ENCODE measurements at regions of chr10 and their contacts with region 1.

Region 1: GRCh38 chr10:32445740-32446535 is at the start of gene CCDC7:
- DNase-seq: peak; percentile 83
- H3K4me3 Mint-ChIP-seq: peak within 1 kb of the TSS; percentile 98
- H3K27ac Mint-ChIP-seq: peak within 1 kb of the TSS; percentile 96
- H3K4me1 Mint-ChIP-seq: peaks cover 9% of the 10 kb centered on the region
- H3K27me3 Mint-ChIP-seq: peaks cover 3% of the 10 kb centered on the region
- total RNA-seq, gene CCDC7: 9.0 and 10.2 TPM in 2 replicates

Region 2: GRCh38 chr10:31928549-31929260 is 517.2 kb before region 1 on chr10 and contains the start of gene ARHGAP12:
- intact Hi-C with region 1: loop called (anchors 5 kb)
- DNase-seq: peak; percentile 68
- H3K4me3 Mint-ChIP-seq: peak within 1 kb of the TSS; percentile 88
- H3K27ac Mint-ChIP-seq: peak within 1 kb of the TSS; percentile 73
- H3K4me1 Mint-ChIP-seq: peaks cover 56% of the 10 kb centered on the region
- H3K27me3 Mint-ChIP-seq: peaks cover 13% of the 10 kb centered on the region
- total RNA-seq, gene ARHGAP12: 2.4 and 3.5 TPM in 2 replicates

Region 3: GRCh38 chr10:32149252-32149955 is 296.5 kb before region 1 on chr10:
- intact Hi-C with region 1: loop called (anchors 1 kb)
- DNase-seq: peak; percentile 36
- H3K4me3 Mint-ChIP-seq: peak overlapping the region; percentile 45
- H3K27ac Mint-ChIP-seq: peak overlapping the region; percentile 94
- H3K4me1 Mint-ChIP-seq: peaks cover 41% of the 10 kb centered on the region
- H3K27me3 Mint-ChIP-seq: no peaks in the 10 kb centered on the region

Region 4: GRCh38 chr10:32459051-32459698 is 13.2 kb after region 1 on chr10:
- intact Hi-C with region 1: loop called (anchors 1 kb)
- DNase-seq: peak; percentile 50
- H3K4me3 Mint-ChIP-seq: no peak overlapping the region
- H3K27ac Mint-ChIP-seq: no peak overlapping the region
- H3K4me1 Mint-ChIP-seq: peaks cover 33% of the 10 kb centered on the region
- H3K27me3 Mint-ChIP-seq: no peaks in the 10 kb centered on the region

Region 5: DNA sequence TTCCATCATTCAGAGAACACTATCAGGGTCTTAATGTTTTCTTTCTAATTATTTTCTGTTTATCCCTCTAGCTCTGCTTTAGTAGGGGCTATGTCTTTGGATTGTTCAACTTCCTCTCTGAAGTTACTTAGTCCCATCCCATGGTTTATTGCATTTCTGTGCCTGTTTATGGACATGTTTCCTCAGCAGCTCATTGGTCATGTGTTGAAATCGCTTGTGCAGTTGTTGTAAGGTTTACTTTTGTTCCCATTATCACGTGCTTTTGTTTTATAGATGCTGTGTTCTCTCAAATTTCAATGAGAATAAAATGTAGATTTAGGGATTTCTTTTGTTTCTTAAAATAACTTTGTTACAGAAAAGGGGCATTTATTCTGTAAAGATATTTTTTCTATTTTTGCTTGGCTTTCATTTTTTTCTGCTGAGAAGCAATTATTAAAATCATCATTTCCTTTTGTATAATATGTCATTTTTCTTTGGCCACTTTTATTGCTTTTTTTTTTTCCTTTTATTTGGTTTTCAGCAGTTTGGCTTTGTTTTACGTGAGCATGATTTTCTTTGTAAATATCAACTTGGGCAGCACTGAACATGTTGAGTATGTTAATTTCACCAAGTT is 111.0 kb after region 1 on chr10:
- intact Hi-C with region 1: no loop called
- DNase-seq: no peak
- H3K4me3 Mint-ChIP-seq: no peak overlapping the region
- H3K27ac Mint-ChIP-seq: no peak overlapping the region
- H3K4me1 Mint-ChIP-seq: no peaks in the 10 kb centered on the region
- H3K27me3 Mint-ChIP-seq: no peaks in the 10 kb centered on the region

Region 6: GRCh38 chr10:33134011-33134751 is 688.2 kb after region 1 on chr10:
- intact Hi-C with region 1: loop called (anchors 5 kb)
- DNase-seq: peak; percentile 48
- H3K4me3 Mint-ChIP-seq: peak overlapping the region; percentile 48
- H3K27ac Mint-ChIP-seq: peak overlapping the region; percentile 88
- H3K4me1 Mint-ChIP-seq: peaks cover 61% of the 10 kb centered on the region
- H3K27me3 Mint-ChIP-seq: no peaks in the 10 kb centered on the region